Natural killer cell (primary cell): ENCODE measurements at regions of chr18 and their contacts with region 1.

Region 1: GRCh38 chr18:2606335-2606734 is 35.0 kb downstream of the NDC80 start:
- DNase-seq: peak in 1 of 2 donors; percentile 60
- ATAC-seq: peak; percentile 39 to 49 (median 39)
- H3K4me3 ChIP-seq: no peak overlapping the region
- H3K4me3 Mint-ChIP-seq: peak overlapping the region; percentile 74
- H3K27ac ChIP-seq: peak overlapping the region; percentile 70
- H3K27ac Mint-ChIP-seq: peak overlapping the region; percentile 89 to 92
- H3K4me1 ChIP-seq: peaks cover 3% of the 10 kb centered on the region
- H3K4me1 Mint-ChIP-seq: peaks cover 20 to 21% of the 10 kb centered on the region in 2 donors
- H3K27me3 ChIP-seq: no peaks in the 10 kb centered on the region
- H3K27me3 Mint-ChIP-seq: no peaks in the 10 kb centered on the region
- CTCF ChIP-seq: no peak

Region 2: DNA sequence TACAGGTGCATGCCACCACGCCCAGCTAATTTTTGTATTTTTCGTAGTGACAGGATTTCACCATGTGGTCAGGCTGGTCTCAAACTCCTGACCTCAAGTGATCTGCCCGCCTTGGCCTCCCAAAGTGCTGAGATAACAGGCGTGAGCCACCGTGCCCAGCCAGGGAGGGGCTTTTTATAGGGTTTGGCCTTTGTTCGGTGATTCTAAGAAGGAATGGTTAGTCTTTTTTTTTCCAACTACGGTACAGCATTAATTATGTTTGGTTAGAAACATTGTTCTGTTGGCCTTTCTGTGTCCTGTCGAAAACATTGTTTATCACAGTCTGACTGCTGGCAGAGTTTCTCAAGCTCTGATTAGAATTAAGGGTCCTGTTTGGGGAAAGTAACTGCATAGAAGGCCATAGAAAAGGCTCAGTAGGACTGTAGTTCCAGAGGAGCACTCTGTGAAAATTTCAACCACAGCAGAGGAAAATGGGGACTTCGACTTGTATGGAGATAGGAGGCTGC is 29.8 kb after region 1 on chr18:
- intact Hi-C with region 1: loop called (anchors 1 kb)
- DNase-seq: peak in 1 of 2 donors; percentile 31
- ATAC-seq: peak; percentile 33 to 40 (median 35)
- H3K4me3 ChIP-seq: peak overlapping the region; percentile 1
- H3K4me3 Mint-ChIP-seq: peak overlapping the region; percentile 92
- H3K27ac ChIP-seq: peak overlapping the region; percentile 92
- H3K27ac Mint-ChIP-seq: peak overlapping the region; percentile 97 to 100
- H3K4me1 ChIP-seq: peaks cover 50% of the 10 kb centered on the region
- H3K4me1 Mint-ChIP-seq: peaks cover 56 to 60% of the 10 kb centered on the region in 2 donors
- H3K27me3 ChIP-seq: no peaks in the 10 kb centered on the region
- H3K27me3 Mint-ChIP-seq: no peaks in the 10 kb centered on the region
- CTCF ChIP-seq: no peak